ENCODE measurements at regions of chr16 and their contacts with region 1.

Region 1: DNA sequence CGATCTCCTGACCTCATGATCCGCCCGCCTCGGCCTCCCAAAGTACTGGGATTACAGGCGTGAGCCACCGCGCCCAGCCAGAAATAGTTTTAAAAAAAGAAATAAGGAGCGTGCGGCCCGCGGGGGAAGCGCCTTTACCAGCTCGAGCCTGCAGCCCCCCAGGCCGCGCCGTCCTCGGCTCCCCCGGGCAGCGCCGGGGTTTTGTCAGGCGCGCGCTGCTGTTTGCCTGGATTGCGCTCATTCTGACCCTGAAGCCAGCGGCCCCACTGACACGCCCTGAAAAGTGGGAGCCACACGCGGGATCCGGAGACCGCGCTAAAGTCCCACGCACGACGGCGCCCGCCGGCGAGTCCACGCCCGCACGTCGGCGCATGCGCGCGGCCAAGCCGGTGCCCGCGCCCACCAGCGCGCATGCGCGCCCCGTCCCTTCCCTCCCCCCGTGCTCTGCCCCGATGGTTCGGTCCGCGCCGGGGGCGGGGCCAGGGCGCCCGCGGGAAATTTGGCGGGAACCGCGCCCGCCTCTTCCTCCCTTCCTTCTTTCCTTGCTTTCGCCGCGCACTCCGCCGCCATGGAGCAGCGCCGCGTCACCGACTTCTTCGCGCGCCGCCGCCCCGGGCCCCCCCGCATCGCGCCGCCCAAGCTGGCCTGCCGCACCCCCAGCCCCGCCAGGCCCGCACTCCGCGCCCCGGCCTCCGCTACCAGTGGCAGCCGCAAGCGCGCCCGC is at the start of gene CDT1:
- DNase-seq: peak; percentile 80 to 88 (median 82)
- H3K4me3 ChIP-seq: peak within 1 kb of the TSS; percentile 58
- H3K4me3 Mint-ChIP-seq: peak within 1 kb of the TSS; percentile 83 to 93 (median 87)
- H3K27ac ChIP-seq: peak within 1 kb of the TSS; percentile 74
- H3K27ac Mint-ChIP-seq: peak within 1 kb of the TSS; percentile 68 to 95 (median 80)
- H3K4me1 ChIP-seq: peaks cover 23% of the 10 kb centered on the region
- H3K4me1 Mint-ChIP-seq: peaks cover 6 to 38% (median 10%) of the 10 kb centered on the region in 3 donors
- H3K27me3 ChIP-seq: no peaks in the 10 kb centered on the region
- H3K27me3 Mint-ChIP-seq: no peaks in the 10 kb centered on the region
- total RNA-seq, gene CDT1: 97.6 to 106 TPM

Region 2: DNA sequence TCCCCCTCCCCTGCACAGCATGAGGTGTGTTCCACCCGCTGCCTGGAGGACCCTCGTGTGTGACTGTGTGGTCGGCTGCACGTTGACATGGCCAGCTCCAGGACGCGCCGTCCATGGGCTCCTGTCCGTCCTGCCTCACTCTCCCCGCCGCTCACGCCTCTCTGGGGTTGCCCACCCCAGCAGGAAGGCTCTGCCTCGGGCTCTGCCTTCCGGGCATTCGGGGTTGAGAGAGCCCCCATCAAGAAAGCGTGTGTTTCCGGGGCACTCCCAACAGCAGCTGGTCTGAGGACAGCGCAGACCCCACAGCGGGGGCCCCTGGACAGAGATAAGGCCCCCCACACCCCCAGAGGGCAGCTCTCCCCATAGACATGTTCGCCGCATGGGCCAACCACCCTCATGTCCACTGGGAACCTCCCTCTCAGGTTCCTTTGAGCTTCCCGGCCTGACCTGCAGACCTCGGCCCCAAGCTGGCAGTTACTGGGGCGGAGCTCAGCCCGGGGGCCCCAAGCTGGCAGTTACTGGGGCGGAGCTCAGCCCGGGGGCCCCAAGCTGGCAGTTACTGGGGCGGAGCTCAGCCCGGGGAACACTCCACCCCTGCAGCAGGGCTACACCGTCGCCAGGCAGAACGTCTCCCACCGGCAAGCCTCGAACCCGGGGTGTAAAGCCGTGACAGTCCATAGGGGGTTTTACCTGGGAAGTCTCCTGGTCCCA is 10.0 kb before region 1 on chr16:
- CTCF ChIA-PET with region 1: interaction called, 11 read pairs
- POLR2A ChIA-PET with region 1: interaction called, 3 read pairs
- DNase-seq: no peak
- H3K4me3 ChIP-seq: no peak overlapping the region
- H3K4me3 Mint-ChIP-seq: peak overlapping the region in 1 of 7 donors; percentile 69
- H3K27ac ChIP-seq: no peak overlapping the region
- H3K27ac Mint-ChIP-seq: peak overlapping the region in 5 of 8 donors; percentile 57 to 94 (median 68)
- H3K4me1 ChIP-seq: peaks cover 54% of the 10 kb centered on the region
- H3K4me1 Mint-ChIP-seq: peaks cover 16 to 67% (median 36%) of the 10 kb centered on the region in 3 donors
- H3K27me3 ChIP-seq: no peaks in the 10 kb centered on the region
- H3K27me3 Mint-ChIP-seq: no peaks in the 10 kb centered on the region